ENCODE measurements at regions of chr3 and their contacts with region 1.

Region 1: DNA sequence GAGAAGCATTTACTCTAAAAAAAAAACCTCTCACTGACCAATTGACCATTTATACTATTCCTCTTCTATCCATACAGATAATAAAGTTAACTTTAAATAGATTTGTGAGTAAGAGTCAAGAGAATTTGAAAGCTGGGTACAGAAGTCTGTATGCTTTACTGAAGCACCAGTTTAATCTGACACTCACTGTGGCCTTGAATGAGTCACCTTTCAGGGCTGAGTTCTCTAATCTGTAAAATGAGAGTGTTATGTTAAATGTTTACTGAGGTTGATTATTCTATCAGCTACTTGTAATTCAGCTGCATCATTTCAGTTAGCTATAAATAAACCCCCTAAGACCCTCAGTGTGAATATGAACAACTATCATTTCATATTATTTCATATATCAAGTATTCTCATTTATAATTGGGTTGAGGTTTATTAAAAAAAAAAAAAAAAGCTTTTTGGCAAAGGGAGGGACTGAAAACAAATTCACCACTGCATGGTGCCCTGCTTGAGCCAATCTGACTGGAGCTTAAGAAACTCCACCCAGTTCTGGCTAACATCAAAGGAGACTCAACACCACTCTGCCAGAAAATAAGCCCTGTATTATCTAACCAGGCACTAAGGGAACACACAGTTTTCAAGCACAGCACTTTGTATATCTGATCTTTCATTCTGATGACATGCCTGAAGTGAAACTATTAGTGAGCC is 2.8 kb downstream of the MAP4 start:
- DNase-seq: no peak
- H3K4me3 ChIP-seq: no peak overlapping the region
- H3K27ac ChIP-seq: peak overlapping the region; percentile 68 to 81 (median 76)
- H3K4me1 ChIP-seq: peaks cover 30 to 72% (median 48%) of the 10 kb centered on the region in 4 donors
- H3K27me3 ChIP-seq: no peaks in the 10 kb centered on the region
- CTCF ChIP-seq: no peak
- EP300 ChIP-seq: peak; percentile 47
- POLR2A ChIP-seq: no peak

Region 2: DNA sequence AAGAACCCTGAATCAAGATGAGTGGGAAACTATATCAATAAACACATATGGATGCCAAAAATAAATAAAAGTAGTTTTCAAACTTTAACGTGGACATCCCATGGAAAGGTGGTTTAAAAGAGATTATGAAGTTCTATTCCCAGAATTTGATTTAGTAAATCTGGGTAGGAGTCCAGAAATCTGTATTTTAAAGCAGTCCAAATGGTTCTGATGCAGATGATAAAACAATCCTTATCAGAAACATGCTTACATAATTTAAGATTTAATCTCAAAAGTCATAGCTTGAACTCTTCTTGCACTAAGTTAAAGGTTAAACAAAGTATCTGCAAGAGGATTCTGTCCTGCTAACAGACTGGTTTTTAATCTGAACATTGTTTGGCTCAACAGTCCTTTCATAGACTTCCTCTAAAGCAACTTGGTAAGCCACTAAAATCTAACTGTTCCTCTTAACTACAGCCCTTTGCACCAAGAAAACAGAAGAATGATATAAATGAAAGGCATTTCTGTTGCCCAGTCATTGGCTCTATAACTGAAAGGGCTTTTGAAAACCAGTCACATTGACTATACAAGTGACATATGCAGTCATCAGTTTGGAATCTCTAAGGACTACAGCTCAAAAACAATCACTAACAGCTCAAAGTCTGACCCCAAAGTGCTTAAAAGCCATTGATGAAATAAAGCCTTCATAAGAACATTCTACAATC is 26.2 kb after region 1 on chr3:
- in situ Hi-C with region 1: no loop called
- intact Hi-C with region 1: no loop called
- DNase-seq: no peak
- H3K4me3 ChIP-seq: no peak overlapping the region
- H3K27ac ChIP-seq: peak overlapping the region; percentile 43 to 66 (median 58)
- H3K4me1 ChIP-seq: peaks cover 20 to 46% (median 26%) of the 10 kb centered on the region in 4 donors
- H3K27me3 ChIP-seq: no peaks in the 10 kb centered on the region
- CTCF ChIP-seq: no peak
- EP300 ChIP-seq: no peak
- POLR2A ChIP-seq: no peak

Region 3: DNA sequence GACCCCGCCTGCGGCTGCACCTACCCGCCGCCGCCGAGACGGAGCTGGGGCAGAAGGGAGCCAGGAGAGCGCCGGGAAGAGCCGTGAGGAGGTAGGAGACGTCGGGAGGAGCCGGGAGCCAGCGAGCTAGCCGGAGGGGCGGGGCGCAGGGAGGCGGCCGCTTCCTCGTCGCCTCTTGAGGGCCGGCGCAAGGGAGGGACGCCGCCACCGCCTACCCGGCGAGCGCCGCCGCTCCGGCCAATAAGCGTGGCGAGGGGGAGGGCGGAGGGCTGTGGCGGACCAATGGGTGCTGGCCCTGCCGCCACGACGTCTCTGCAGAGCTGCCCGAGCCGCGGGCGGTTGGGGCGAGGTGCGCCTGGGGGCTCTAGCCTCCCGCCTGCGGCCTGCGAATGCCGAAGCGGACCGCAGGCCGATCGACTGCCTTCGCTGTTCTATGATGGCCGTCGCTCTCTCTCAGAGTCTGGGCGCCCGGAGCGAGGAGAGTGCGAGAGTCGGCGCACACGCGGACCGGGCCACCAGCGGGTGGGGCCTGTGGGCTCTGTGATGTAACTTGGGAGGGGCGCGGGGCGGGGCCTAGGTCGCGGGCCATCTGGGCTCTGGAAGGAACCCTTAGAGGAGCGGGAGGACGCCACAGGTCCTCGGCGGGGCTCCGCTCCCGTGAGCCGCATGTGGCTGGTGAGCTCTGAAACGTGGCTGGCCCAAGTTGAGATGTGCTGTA is 75.5 kb after region 1 on chr3:
- in situ Hi-C with region 1: no loop called
- intact Hi-C with region 1: loop called (anchors 5 kb)
- DNase-seq: peak; percentile 98
- H3K4me3 ChIP-seq: peak overlapping the region; percentile 75 to 96 (median 83)
- H3K27ac ChIP-seq: peak overlapping the region; percentile 94 to 98 (median 97)
- H3K4me1 ChIP-seq: peaks cover 10 to 35% (median 18%) of the 10 kb centered on the region in 4 donors
- H3K27me3 ChIP-seq: no peaks in the 10 kb centered on the region
- CTCF ChIP-seq: peak in 2 of 5 experiments; percentile 0 to 37
- EP300 ChIP-seq: no peak
- POLR2A ChIP-seq: peak; percentile 92

Measured in transverse colon (tissue), 4 donors.